AG04450 (cell line): ENCODE measurements at regions of chr2 and their contacts with region 1.

Region 1: DNA sequence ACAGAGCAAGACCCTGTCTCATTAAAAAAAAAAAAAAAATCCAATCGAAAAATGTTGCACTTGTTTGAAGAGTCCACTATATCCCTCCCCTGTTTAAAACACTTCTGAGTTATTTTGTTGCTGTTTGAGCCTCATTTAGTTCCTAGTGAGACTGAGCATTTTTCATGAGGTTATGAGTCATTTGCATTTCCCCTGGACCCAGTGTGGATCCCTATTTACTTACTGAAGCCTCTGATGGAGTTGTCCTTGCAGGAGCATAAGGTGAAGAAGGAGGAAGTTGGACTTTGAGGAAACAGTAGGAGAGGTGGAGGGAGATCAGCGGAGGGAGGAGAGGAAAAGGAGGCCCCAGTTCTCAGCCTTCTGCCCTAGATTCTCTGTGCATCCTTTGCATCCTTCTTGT is 5.1 kb downstream of the CXCR1 start:
- DNase-seq: no peak
- H3K4me3 ChIP-seq: no peak overlapping the region
- H3K27ac ChIP-seq: no peak overlapping the region
- H3K27me3 ChIP-seq: peaks cover 34% of the 10 kb centered on the region
- CTCF ChIP-seq: no peak

Region 2: DNA sequence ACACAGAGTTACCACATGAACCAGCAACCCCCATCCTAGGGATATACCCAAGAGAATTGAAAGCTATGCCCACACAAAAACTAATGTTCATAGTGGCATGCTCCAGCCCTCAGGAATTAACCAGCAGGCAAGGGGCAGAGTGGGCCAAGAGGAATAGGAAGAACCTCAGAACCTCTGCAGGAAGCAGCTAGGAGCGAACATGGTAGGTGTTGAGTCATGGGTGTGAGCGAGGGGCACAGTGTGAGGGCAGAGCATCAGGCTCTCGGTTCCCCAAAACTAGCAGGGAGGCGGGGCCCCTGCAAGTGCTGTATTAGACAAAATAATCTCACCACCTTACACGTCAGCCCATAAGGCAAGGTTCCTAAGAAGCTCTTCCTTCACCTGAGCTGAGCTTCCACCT is 98.2 kb before region 1 on chr2:
- CTCF ChIA-PET with region 1: no interaction called
- POLR2A ChIA-PET with region 1: no interaction called
- DNase-seq: no peak
- H3K4me3 ChIP-seq: no peak overlapping the region
- H3K27ac ChIP-seq: no peak overlapping the region
- H3K27me3 ChIP-seq: peaks cover 64% of the 10 kb centered on the region
- CTCF ChIP-seq: no peak

Region 3: GRCh38 chr2:218312267-218312756 is 150.7 kb after region 1 on chr2:
- CTCF ChIA-PET with region 1: interaction called, 11 read pairs
- POLR2A ChIA-PET with region 1: no interaction called
- DNase-seq: no peak
- H3K4me3 ChIP-seq: no peak overlapping the region
- H3K27ac ChIP-seq: no peak overlapping the region
- H3K27me3 ChIP-seq: peaks cover under 1% of the 10 kb centered on the region
- CTCF ChIP-seq: no peak

Region 4: DNA sequence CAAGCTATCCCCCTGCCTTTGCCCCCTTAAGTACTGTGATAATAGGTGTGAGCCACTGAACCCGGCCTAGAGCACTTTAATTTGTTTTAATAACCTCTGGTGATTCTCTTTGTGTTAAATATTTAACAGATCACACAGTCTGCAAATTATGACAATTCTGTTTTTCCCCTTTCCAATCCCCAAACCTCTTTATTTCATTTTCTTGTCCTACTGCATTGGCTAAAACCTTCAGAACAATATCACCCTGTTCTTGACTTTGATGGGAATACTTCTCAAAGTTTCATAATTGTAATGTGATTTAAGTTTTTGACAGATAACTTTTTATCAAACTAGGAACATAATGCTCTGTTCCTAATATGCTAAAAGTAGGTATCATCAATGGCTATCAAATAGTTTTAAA is 362.0 kb after region 1 on chr2:
- CTCF ChIA-PET with region 1: no interaction called
- POLR2A ChIA-PET with region 1: no interaction called
- DNase-seq: no peak
- H3K4me3 ChIP-seq: no peak overlapping the region
- H3K27ac ChIP-seq: no peak overlapping the region
- H3K27me3 ChIP-seq: no peaks in the 10 kb centered on the region
- CTCF ChIP-seq: no peak